Activated B cell treated with CpG ODN at 0.5 μM for 24 hours (primary cell): ENCODE measurements at regions of chr17 and their contacts with region 1.

Region 1: GRCh38 chr17:46922804-46923635 is at the start of gene GOSR2:
- DNase-seq: peak; percentile 93
- ATAC-seq: peak; percentile 95
- H3K4me3 Mint-ChIP-seq: peak within 1 kb of the TSS; percentile 91
- H3K27ac Mint-ChIP-seq: peak within 1 kb of the TSS; percentile 100
- H3K4me1 Mint-ChIP-seq: peaks cover 49% of the 10 kb centered on the region
- H3K27me3 Mint-ChIP-seq: peaks cover 2% of the 10 kb centered on the region
- CTCF ChIP-seq: no peak
- total RNA-seq, gene GOSR2: 64.7 and 78.0 TPM in 2 replicates

Region 2: GRCh38 chr17:46851029-46851741 is 71.8 kb before region 1 on chr17 and contains the start of gene WNT9B:
- CTCF ChIA-PET with region 1: no interaction called
- POLR2A ChIA-PET with region 1: no interaction called
- intact Hi-C with region 1: loop called (anchors 5 kb)
- DNase-seq: no peak
- ATAC-seq: peak; percentile 37
- H3K4me3 Mint-ChIP-seq: peak within 1 kb of the TSS; percentile 73
- H3K27ac Mint-ChIP-seq: no peak within 1 kb of the TSS
- H3K4me1 Mint-ChIP-seq: peaks cover 16% of the 10 kb centered on the region
- H3K27me3 Mint-ChIP-seq: peaks cover 69% of the 10 kb centered on the region
- CTCF ChIP-seq: no peak
- total RNA-seq, gene WNT9B: not detected in 2 replicates

Region 3: DNA sequence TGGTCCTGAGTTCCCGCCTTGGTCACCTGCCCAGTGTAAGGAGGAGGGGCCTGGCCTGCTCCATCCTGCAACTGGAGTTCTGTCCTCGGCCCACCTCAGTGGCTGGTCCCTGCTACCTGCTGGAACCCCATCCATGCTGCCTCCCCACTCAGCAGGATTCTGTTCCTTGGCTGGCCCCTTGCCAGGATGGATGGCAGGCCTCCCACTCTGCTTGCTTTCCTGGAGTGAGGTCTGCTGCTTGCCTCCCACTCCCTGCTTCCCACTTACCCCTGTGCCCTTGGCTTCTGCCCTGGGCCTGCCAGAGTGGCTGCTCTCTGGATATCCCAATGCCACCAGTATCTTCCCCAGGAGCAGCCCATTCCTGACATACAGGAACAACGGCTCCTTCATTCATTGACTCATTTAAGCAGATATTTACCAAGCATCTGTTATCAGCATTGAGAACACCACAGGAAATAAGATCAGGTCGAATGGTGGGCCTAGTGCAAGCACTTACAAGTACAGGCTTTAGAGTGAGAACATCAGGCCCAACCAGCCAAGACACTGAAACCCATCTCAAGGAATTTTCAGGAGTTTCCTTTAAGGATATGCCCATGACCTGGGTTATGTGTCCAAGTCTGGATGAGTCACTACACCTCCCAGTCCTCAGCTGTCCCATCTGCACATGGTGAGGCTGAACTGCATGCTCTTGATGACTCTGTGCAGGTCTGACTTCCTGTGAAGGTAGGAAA is 73.0 kb after region 1 on chr17:
- CTCF ChIA-PET with region 1: no interaction called
- POLR2A ChIA-PET with region 1: no interaction called
- intact Hi-C with region 1: no loop called
- DNase-seq: no peak
- ATAC-seq: no peak
- H3K4me3 Mint-ChIP-seq: no peak overlapping the region
- H3K27ac Mint-ChIP-seq: no peak overlapping the region
- H3K4me1 Mint-ChIP-seq: peaks cover 34% of the 10 kb centered on the region
- H3K27me3 Mint-ChIP-seq: no peaks in the 10 kb centered on the region
- CTCF ChIP-seq: no peak